GM13976 (cell line): ENCODE measurements at regions of chr22 and their contacts with region 1.

Region 1: DNA sequence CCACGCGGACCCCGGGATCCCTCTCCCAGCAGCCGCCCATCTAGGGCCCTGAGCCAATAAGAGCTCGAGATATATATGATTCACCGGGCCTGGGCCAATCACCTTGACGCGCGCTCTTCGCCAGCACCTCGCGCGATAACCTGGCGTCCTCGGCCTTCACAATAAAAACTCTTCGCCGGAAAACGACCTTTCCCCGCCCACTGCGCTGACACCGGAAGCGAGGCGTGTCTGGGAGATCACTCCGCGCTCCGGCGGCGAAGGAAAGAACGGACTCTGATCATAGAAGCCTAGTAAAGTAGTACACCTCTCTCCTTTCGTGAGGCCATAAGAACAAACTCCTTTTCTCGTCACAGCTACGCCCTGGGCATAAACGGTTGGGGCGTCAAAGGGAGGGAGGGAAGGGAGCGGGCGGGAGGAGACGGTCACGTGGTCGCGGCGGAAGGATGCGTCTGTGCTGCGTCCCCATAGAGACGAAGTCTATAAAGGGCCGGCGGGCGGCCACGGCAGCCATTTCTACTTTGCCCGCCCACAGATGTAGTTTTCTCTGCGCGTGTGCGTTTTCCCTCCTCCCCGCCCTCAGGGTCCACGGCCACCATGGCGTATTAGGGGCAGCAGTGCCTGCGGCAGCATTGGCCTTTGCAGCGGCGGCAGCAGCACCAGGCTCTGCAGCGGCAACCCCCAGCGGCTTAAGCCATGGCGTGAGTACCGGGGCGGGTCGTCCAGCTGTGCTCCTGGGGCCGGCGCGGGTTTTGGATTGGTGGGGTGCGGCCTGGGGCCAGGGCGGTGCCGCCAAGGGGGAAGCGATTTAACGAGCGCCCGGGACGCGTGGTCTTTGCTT is at the start of gene ATF4:
- DNase-seq: peak; percentile 98
- CTCF ChIP-seq: no peak

Region 2: GRCh38 chr22:39152511-39153219 is 367.6 kb before region 1 on chr22 and contains the start of gene CBX7:
- in situ Hi-C with region 1: loop called (anchors 25 kb)
- DNase-seq: peak; percentile 99
- CTCF ChIP-seq: no peak

Region 3: GRCh38 chr22:39212721-39213376 is 307.4 kb before region 1 on chr22:
- in situ Hi-C with region 1: no loop called
- DNase-seq: peak; percentile 20
- CTCF ChIP-seq: no peak

Region 4: GRCh38 chr22:39332441-39333064 is 187.7 kb before region 1 on chr22:
- in situ Hi-C with region 1: no loop called
- DNase-seq: no peak
- CTCF ChIP-seq: no peak

Region 5: DNA sequence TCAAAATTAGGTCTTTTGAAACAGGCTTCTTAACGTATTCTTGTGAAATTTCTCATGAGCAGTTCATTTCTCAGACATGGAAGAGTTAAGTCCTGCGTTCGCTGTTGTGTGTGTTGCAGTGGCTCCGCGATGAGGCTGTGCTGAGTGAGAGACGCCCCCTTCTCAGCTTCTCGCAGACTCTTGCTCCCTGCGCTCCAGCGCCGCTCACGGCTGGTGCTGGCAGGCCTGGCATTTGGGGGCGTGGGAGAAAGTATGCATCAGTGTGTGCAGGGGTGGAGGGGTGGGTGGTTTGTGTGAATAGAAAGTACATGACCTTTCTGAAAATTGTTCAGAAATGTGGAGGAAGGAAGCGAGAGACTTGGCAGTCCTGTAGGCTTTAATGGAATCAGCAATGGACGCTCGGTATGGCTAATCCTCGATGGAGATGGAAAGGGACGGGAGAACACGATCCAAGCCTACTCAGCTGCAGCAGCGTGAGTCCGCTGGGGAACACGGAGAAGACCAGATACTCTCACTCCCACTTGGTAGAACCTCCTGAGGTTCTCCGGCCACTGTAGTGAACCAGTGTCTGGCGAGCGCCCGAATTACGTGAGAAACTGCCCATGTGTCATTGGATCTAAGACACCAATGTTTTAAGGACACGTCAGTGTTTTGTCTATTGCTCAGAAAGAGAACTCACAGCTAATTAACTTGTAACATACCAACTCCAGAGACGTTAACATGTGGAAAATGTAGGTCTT is 114.8 kb before region 1 on chr22:
- in situ Hi-C with region 1: no loop called
- DNase-seq: no peak
- CTCF ChIP-seq: no peak